Transverse colon (tissue), 4 donors: ENCODE measurements at regions of chr1 and their contacts with region 1.

Region 1: DNA sequence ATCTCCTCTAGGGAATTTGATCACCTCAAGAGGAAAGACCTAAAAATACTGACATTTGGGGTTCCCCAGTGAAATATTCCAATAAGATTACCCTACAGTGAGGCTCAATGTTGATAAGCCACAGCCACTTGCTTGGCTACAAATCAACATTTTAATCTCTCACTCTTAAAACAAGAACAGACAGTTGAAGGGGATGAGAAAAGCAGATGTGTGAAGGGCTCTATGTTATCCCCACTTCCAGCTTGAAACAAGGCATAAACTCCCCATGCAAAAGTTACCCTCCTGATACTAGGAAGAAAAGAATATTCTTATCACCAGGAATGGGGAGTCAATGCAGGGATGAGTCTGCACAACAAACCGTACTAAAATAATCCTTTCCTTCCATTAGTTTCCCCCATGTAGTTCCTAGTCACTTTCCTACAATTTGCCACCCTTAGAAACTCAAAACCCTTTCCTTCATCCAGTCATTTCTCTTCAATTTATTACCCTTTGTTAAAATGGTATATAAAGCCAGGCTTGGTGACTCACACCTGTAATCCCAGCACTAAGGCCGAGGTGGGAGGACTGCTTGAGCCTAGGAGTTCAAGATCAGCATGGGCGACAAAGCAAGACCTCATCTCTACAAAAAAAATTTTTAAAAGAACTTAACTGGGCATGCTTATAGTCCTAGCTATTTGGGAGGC is 29.5 kb downstream of the LPGAT1 start:
- DNase-seq: no peak
- H3K4me3 ChIP-seq: no peak overlapping the region
- H3K27ac ChIP-seq: no peak overlapping the region
- H3K4me1 ChIP-seq: no peaks in the 10 kb centered on the region
- H3K27me3 ChIP-seq: no peaks in the 10 kb centered on the region
- CTCF ChIP-seq: no peak
- EP300 ChIP-seq: no peak
- POLR2A ChIP-seq: no peak

Region 2: DNA sequence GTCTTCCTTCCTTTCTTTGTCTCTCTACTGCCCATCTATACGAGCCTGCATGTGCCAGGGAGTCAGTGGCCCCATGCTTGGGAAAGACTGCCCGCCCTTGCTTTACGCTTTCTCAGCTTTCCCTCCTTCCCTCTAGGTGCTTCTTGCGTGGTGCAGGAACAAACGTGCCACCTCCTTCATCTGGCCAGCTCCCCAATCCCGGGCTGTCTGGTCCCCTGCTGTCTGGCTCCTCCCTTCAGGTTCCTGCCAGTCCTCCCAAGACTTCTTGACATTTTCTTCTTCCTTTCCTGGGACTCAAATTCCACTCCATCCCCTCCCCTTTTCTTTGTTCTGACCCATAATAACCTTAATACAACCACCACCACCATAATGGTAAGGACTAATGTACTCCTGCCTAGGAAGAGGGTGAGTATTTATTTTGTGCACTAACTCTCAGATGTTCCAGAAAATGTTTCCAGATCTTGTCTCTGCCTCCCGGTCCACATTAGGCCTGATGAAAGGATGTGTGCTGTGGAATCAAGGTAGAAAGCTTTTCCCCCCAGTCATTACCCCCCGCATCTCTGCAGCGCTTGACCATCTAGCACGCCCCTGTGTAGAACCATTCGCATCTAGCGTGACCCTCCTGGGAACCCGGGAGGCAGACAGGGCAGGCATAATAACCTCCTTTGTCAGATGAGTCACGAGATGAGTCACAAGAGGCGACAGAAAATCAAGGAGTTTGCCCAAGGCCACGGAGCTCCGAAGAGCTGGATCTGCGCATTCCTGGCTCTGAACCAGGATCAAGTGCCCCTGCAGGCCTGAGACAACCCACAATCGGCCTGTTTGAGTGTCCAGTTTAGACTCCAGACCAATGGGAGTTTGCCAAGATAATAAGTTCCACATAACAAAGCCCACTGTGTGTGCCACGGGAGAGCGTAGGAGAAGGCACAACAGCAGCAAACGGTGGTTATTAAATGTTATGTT is 65.6 kb before region 1 on chr1:
- in situ Hi-C with region 1: no loop called
- intact Hi-C with region 1: loop called (anchors 10 kb)
- DNase-seq: peak; percentile 17
- H3K4me3 ChIP-seq: no peak overlapping the region
- H3K27ac ChIP-seq: peak overlapping the region in 1 of 4 donors; percentile 10
- H3K4me1 ChIP-seq: peaks cover 6 to 13% (median 9%) of the 10 kb centered on the region in 4 donors
- H3K27me3 ChIP-seq: no peaks in the 10 kb centered on the region
- CTCF ChIP-seq: no peak
- EP300 ChIP-seq: no peak
- POLR2A ChIP-seq: no peak